Activated T-helper 1 cell treated with anti-CD3 and anti-CD28 coated beads, Interleukin-12 subunit alpha, Interleukin-12 subunit beta, Interleukin-2, Interleukin-4 antibody, amounts not matched to agents 30 ng/mL and 10 ng/mL and 1 ng/mL, durations not matched to agents 14 hours and 24 hours and 36 hours (primary cell): ENCODE measurements at regions of chr14 and their contacts with region 1.

Region 1: DNA sequence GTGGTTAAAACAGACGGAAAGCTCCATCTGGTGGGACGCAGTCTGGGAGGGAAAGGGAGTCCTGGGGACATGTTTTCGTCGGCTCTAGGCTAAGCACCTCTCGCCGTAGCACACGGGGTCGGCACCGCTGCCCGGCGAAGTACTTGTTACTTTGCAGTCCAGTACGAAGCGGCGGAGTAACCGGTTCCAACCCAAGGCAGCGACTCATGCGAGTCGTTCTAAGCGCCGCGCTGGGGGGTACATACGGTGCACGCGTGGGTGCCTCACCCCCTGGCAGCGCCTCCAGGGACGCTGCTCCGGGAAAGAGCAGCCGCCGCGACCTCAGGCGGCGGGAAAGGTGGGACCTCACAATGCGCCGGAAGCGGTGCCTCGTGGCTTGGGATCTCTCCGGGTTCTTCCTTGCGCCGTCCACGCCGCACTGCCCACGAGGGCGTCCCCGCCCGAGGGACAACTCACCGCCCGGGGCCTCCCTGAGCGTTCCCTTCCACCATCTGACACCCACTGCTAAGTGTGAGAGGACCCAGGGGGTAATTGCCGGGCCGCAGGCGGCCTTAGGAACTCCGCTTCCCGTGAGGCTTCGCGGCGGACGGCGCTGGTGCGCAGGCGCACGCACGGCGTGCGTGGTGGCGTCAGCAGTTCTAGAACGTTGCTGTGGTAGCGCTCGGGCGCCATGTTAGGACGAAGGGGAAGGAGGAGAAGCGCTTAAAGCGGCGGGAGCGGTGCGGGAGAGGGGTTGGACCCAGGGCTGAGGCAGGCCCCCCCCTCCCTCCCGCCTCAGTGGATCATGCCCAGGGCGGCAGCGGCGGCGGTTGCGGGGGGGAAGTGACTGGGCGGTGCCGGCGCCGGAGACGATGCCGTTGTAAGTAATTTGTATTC is at the start of gene PAPOLA:
- DNase-seq: peak; percentile 96
- H3K4me3 Mint-ChIP-seq: peak within 1 kb of the TSS; percentile 97
- H3K27ac Mint-ChIP-seq: peak within 1 kb of the TSS; percentile 97
- H3K4me1 Mint-ChIP-seq: peaks cover 47% of the 10 kb centered on the region
- H3K27me3 Mint-ChIP-seq: peaks cover 16% of the 10 kb centered on the region
- total RNA-seq, gene PAPOLA: 191 and 217 TPM in 2 replicates

Region 2: GRCh38 chr14:96285667-96286066 is 216.3 kb before region 1 on chr14:
- intact Hi-C with region 1: no loop called
- DNase-seq: no peak
- H3K4me3 Mint-ChIP-seq: no peak overlapping the region
- H3K27ac Mint-ChIP-seq: no peak overlapping the region
- H3K4me1 Mint-ChIP-seq: no peaks in the 10 kb centered on the region
- H3K27me3 Mint-ChIP-seq: no peaks in the 10 kb centered on the region

Region 3: DNA sequence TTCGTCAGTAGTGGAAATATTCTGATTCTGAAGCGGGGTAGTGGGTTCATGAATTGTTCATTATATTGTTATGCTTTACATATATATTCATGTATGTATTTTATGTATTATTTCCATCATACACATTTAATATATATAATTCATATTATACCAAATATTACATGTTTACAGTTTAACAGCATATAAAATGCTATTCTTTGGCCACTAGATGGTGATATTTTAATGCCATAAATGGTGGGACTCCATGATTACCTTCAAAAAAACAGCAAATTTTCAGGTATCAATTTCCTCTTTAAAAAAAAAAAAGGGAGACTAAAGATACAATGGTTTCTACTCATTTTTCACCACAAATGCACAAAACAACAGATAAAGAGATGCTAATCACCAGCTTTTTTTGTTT is 205.0 kb before region 1 on chr14:
- intact Hi-C with region 1: loop called (anchors 5 kb)
- DNase-seq: no peak
- H3K4me3 Mint-ChIP-seq: no peak overlapping the region
- H3K27ac Mint-ChIP-seq: no peak overlapping the region
- H3K4me1 Mint-ChIP-seq: no peaks in the 10 kb centered on the region
- H3K27me3 Mint-ChIP-seq: no peaks in the 10 kb centered on the region

Region 4: GRCh38 chr14:96362965-96363756 is 138.8 kb before region 1 on chr14 and contains the starts of genes ATG2B and GSKIP:
- intact Hi-C with region 1: loop called (anchors 1 kb)
- DNase-seq: peak; percentile 97
- H3K4me3 Mint-ChIP-seq: peak within 1 kb of the TSS; percentile 98
- H3K27ac Mint-ChIP-seq: peak within 1 kb of the TSS; percentile 97
- H3K4me1 Mint-ChIP-seq: peaks cover 55% of the 10 kb centered on the region
- H3K27me3 Mint-ChIP-seq: no peaks in the 10 kb centered on the region
- total RNA-seq, gene ATG2B: 22.2 and 27.7 TPM in 2 replicates
- total RNA-seq, gene GSKIP: 22.7 and 23.7 TPM in 2 replicates

Region 5: GRCh38 chr14:96538097-96538989 is 36.4 kb after region 1 on chr14:
- intact Hi-C with region 1: loop called (anchors 2 kb)
- DNase-seq: no peak
- H3K4me3 Mint-ChIP-seq: peak overlapping the region; percentile 40
- H3K27ac Mint-ChIP-seq: peak overlapping the region; percentile 58
- H3K4me1 Mint-ChIP-seq: peaks cover 13% of the 10 kb centered on the region
- H3K27me3 Mint-ChIP-seq: no peaks in the 10 kb centered on the region

Region 6: GRCh38 chr14:96796851-96797581 is 295.0 kb after region 1 on chr14 and contains the start of gene VRK1:
- intact Hi-C with region 1: loop called (anchors 5 kb)
- DNase-seq: peak; percentile 91
- H3K4me3 Mint-ChIP-seq: peak within 1 kb of the TSS; percentile 91
- H3K27ac Mint-ChIP-seq: peak within 1 kb of the TSS; percentile 82
- H3K4me1 Mint-ChIP-seq: peaks cover 45% of the 10 kb centered on the region
- H3K27me3 Mint-ChIP-seq: peaks cover 9% of the 10 kb centered on the region
- total RNA-seq, gene VRK1: 72.1 and 79.4 TPM in 2 replicates